Mucosa of descending colon (tissue), 3 donors: ENCODE measurements at regions of chr17 and their contacts with region 1.

Region 1: GRCh38 chr17:78112518-78113226 is 15.9 kb downstream of the TMC6 start:
- DNase-seq: peak; percentile 87 to 90 (median 88)
- ATAC-seq: peak; percentile 91
- H3K4me3 ChIP-seq: no peak overlapping the region
- H3K4me1 ChIP-seq: peaks cover 7% of the 10 kb centered on the region
- CTCF ChIP-seq: peak; percentile 99

Region 2: GRCh38 chr17:78186692-78187595 is 74.3 kb after region 1 on chr17 and contains the starts of genes AFMID and TK1:
- intact Hi-C with region 1: loop called in 1 of 2 experiments (anchors 5 kb)
- DNase-seq: peak; percentile 96 to 100 (median 97)
- ATAC-seq: peak; percentile 92
- H3K4me3 ChIP-seq: peak within 1 kb of the TSS; percentile 24
- H3K4me1 ChIP-seq: peaks cover 5% of the 10 kb centered on the region
- CTCF ChIP-seq: peak; percentile 75
- total RNA-seq, gene AFMID: 14.2 to 39.9 (median 27.9) TPM
- total RNA-seq, gene TK1: 8.9 to 46.5 (median 10.2) TPM